Heart right ventricle (tissue), 16 donors: ENCODE measurements at regions of chr13 and their contacts with region 1.

Region 1: DNA sequence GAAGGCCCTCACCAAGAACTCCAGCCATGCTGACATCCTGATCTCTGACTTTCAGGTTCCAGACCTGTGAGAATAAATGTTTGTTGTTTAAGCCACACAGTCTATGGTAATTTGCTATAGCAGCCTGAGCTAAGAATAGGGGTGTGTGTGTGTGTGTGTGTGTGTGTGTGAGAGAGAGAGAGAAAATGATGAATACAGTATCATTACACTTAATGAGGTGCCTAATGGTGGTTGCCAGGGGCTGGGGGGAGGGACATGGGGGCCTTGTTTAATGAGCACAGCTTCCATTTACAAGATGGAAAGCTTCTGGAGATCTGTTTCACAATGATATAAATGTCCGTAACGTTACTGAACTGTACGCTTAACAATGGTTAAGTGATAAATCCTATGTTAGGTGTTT is 53.8 kb upstream of the LATS2 start:
- DNase-seq: no peak
- ATAC-seq: no peak
- H3K4me3 ChIP-seq: no peak overlapping the region
- H3K27ac ChIP-seq: no peak overlapping the region
- H3K4me1 ChIP-seq: no peaks in the 10 kb centered on the region
- H3K27me3 ChIP-seq: no peaks in the 10 kb centered on the region
- CTCF ChIP-seq: no peak

Region 2: DNA sequence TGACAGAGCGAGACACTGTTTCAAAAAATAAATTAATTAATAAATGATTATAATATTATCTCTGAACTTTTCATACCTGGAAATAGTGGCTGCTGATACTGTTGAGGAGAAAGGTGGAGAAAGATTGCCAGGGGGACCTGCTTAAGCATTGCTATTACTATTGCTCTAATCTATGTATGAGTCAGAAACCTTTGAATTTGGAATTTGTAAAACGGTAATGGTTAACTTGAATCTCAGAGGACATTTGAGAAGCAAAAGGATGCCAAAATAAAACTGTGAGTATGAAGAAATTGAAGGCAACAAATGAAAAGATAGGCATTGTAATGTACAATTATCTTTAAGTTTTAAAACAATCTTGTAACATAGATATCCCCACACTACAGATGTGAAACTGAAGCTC is 66.4 kb after region 1 on chr13:
- intact Hi-C with region 1: loop called in 1 of 10 experiments (anchors 10 kb)
- DNase-seq: no peak
- ATAC-seq: no peak
- H3K4me3 ChIP-seq: no peak overlapping the region
- H3K27ac ChIP-seq: no peak overlapping the region
- H3K4me1 ChIP-seq: peaks cover 3 to 21% (median 13%) of the 10 kb centered on the region in 9 donors
- H3K27me3 ChIP-seq: no peaks in the 10 kb centered on the region
- CTCF ChIP-seq: no peak

Region 3: DNA sequence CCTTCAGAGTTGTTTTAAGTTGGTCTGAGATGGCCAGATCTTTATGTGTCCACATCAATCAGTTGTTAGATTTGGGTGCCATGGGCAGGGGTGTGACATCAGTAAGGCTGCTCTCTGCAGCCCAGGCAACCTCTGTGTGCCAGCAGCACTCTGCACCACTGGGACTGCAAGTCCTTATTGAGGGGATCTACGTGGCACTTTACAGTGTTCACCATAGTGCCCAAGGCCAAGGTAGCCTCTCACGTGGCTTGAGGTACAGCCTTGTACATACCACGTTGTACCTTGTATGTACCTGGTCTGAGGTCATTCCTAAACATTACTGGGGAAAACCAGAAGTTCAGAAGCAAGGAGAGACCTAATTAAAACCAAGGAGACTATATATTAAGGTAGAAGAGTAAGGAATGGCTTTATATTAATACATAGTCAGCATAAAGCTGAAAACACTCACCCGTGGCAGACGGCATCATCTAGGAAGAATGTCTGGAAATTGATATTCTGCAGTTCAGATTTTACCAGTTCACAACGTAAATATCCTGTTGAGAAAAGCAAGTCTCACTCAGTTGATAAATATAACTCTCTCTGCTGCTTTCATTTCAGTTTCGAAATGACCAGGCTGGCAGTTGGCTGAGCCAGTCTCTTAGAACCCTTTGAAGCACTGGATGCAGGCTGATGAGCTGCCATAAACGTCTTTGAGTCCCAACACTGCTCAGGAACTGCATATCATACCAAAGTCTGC is 215.1 kb after region 1 on chr13:
- intact Hi-C with region 1: no loop called
- DNase-seq: no peak
- ATAC-seq: no peak
- H3K4me3 ChIP-seq: no peak overlapping the region
- H3K27ac ChIP-seq: no peak overlapping the region
- H3K4me1 ChIP-seq: peaks cover 0 to 8% (median 0%) of the 10 kb centered on the region in 9 donors
- H3K27me3 ChIP-seq: no peaks in the 10 kb centered on the region
- CTCF ChIP-seq: no peak